ENCODE measurements at regions of chr4 and their contacts with region 1.

Region 1: GRCh38 chr4:180587379-180587778 is 1655.8 kb upstream of the TENM3 start:
- DNase-seq: no peak
- H3K4me3 ChIP-seq: no peak overlapping the region
- H3K27ac ChIP-seq: no peak overlapping the region
- H3K4me1 ChIP-seq: no peaks in the 10 kb centered on the region
- H3K27me3 ChIP-seq: no peaks in the 10 kb centered on the region
- CTCF ChIP-seq: peak in 1 of 2 donors; percentile 8

Region 2: GRCh38 chr4:180603791-180604190 is 16.4 kb after region 1 on chr4:
- CTCF ChIA-PET with region 1: no interaction called
- dilution Hi-C with region 1: no loop called
- in situ Hi-C with region 1: no loop called
- intact Hi-C with region 1: loop called (anchors 1 kb)
- DNase-seq: no peak
- H3K4me3 ChIP-seq: no peak overlapping the region
- H3K27ac ChIP-seq: no peak overlapping the region
- H3K4me1 ChIP-seq: no peaks in the 10 kb centered on the region
- H3K27me3 ChIP-seq: no peaks in the 10 kb centered on the region
- CTCF ChIP-seq: no peak

Region 3: GRCh38 chr4:181528570-181529184 is 941.3 kb after region 1 on chr4:
- CTCF ChIA-PET with region 1: no interaction called
- dilution Hi-C with region 1: no loop called
- in situ Hi-C with region 1: no loop called
- intact Hi-C with region 1: no loop called
- DNase-seq: peak; percentile 43
- H3K4me3 ChIP-seq: no peak overlapping the region
- H3K27ac ChIP-seq: no peak overlapping the region
- H3K4me1 ChIP-seq: no peaks in the 10 kb centered on the region
- H3K27me3 ChIP-seq: peaks cover 3% of the 10 kb centered on the region
- CTCF ChIP-seq: peak; percentile 95 to 99